Activated CD4-positive, alpha-beta T cell treated with anti-CD3 and anti-CD28 coated beads, Interleukin-2, amount 10 ng/mL, durations not matched to agents 7 days and 5 days (primary cell): ENCODE measurements at regions of chr1 and their contacts with region 1.

Region 1: DNA sequence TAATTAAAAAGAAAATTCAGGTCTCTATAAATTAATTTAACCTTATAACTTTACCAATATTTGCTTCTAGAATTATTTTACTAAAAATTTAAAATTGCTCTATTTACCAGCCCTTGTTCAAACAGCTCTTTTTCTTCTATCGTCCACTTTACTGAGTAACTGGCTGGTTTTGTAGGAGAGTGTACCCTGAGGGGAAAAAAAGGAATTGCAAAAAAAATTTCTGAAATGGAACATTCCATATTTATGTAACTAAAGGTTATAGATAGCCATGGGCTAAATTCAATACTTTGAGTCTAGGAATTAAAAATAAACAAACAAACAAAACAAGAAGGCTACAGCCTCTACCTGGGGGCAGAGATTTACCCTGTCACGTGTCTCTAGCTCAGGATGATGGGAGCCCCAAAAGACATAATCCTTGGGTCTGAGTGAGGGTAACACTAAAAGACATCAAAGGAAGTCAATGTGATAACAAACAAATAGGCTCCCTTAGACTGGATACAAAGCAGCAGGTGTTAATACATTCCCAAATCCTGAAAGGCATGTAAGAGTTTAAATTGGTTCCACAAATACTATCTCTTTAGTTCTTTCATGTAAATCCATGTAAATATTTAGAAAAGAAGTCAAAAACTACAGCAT is 10.8 kb downstream of the MYSM1 start:
- DNase-seq: no peak
- H3K4me3 Mint-ChIP-seq: no peak overlapping the region
- H3K27ac Mint-ChIP-seq: no peak overlapping the region
- H3K4me1 Mint-ChIP-seq: peaks cover 11% of the 10 kb centered on the region
- H3K27me3 Mint-ChIP-seq: no peaks in the 10 kb centered on the region

Region 2: GRCh38 chr1:58699011-58699762 is 10.1 kb after region 1 on chr1:
- CTCF ChIA-PET with region 1: no interaction called
- POLR2A ChIA-PET with region 1: no interaction called
- DNase-seq: no peak
- H3K4me3 Mint-ChIP-seq: peak overlapping the region; percentile 90
- H3K27ac Mint-ChIP-seq: peak overlapping the region; percentile 100
- H3K4me1 Mint-ChIP-seq: peaks cover 22% of the 10 kb centered on the region
- H3K27me3 Mint-ChIP-seq: no peaks in the 10 kb centered on the region

Region 3: GRCh38 chr1:58726581-58726980 is 37.5 kb after region 1 on chr1:
- CTCF ChIA-PET with region 1: no interaction called
- POLR2A ChIA-PET with region 1: interaction called, 12 read pairs
- DNase-seq: no peak
- H3K4me3 Mint-ChIP-seq: no peak overlapping the region
- H3K27ac Mint-ChIP-seq: peak overlapping the region; percentile 25
- H3K4me1 Mint-ChIP-seq: peaks cover 23% of the 10 kb centered on the region
- H3K27me3 Mint-ChIP-seq: no peaks in the 10 kb centered on the region

Region 4: GRCh38 chr1:58922302-58923089 is 233.4 kb after region 1 on chr1:
- CTCF ChIA-PET with region 1: no interaction called
- POLR2A ChIA-PET with region 1: no interaction called
- DNase-seq: peak; percentile 65
- H3K4me3 Mint-ChIP-seq: no peak overlapping the region
- H3K27ac Mint-ChIP-seq: peak overlapping the region; percentile 11
- H3K4me1 Mint-ChIP-seq: peaks cover 29% of the 10 kb centered on the region
- H3K27me3 Mint-ChIP-seq: no peaks in the 10 kb centered on the region